ENCODE measurements at regions of chr6 and their contacts with region 1.

Region 1: GRCh38 chr6:28335564-28336283 is at the start of gene ZSCAN31:
- DNase-seq: peak; percentile 61
- ATAC-seq: peak; percentile 93
- H3K4me3 Mint-ChIP-seq: no peak within 1 kb of the TSS
- H3K27ac Mint-ChIP-seq: no peak within 1 kb of the TSS
- H3K4me1 Mint-ChIP-seq: no peaks in the 10 kb centered on the region
- H3K27me3 Mint-ChIP-seq: no peaks in the 10 kb centered on the region
- CTCF ChIP-seq: no peak
- total RNA-seq, gene ZSCAN31: 1.0 and 3.6 TPM in 2 replicates

Region 2: GRCh38 chr6:28311139-28311823 is 24.4 kb before region 1 on chr6:
- CTCF ChIA-PET with region 1: no interaction called
- POLR2A ChIA-PET with region 1: no interaction called
- intact Hi-C with region 1: no loop called
- DNase-seq: no peak
- ATAC-seq: no peak
- H3K4me3 Mint-ChIP-seq: no peak overlapping the region
- H3K27ac Mint-ChIP-seq: no peak overlapping the region
- H3K4me1 Mint-ChIP-seq: no peaks in the 10 kb centered on the region
- H3K27me3 Mint-ChIP-seq: peaks cover 4% of the 10 kb centered on the region
- CTCF ChIP-seq: no peak

Region 3: GRCh38 chr6:28349892-28350737 is 14.4 kb after region 1 on chr6 and contains the start of gene ZKSCAN3:
- CTCF ChIA-PET with region 1: interaction called, 14 read pairs
- POLR2A ChIA-PET with region 1: interaction called, 10 read pairs
- intact Hi-C with region 1: loop called (anchors 1 kb)
- DNase-seq: peak; percentile 68
- ATAC-seq: peak; percentile 100
- H3K4me3 Mint-ChIP-seq: peak within 1 kb of the TSS; percentile 96
- H3K27ac Mint-ChIP-seq: peak within 1 kb of the TSS; percentile 94
- H3K4me1 Mint-ChIP-seq: peaks cover 28% of the 10 kb centered on the region
- H3K27me3 Mint-ChIP-seq: peaks cover 7% of the 10 kb centered on the region
- CTCF ChIP-seq: no peak
- total RNA-seq, gene ZKSCAN3: 5.6 and 6.3 TPM in 2 replicates

Measured in activated B cell treated with CpG ODN at 0.5 μM for 24 hours (primary cell).